B cell (primary cell): ENCODE measurements at regions of chr18 and their contacts with region 1.

Region 1: GRCh38 chr18:10490401-10491165 is 35.2 kb upstream of the NAPG start:
- DNase-seq: peak; percentile 90
- ATAC-seq: peak; percentile 100
- H3K4me3 ChIP-seq: no peak overlapping the region
- H3K4me3 Mint-ChIP-seq: no peak overlapping the region
- H3K27ac ChIP-seq: peak overlapping the region; percentile 3 to 60
- H3K27ac Mint-ChIP-seq: peak overlapping the region; percentile 88
- H3K4me1 ChIP-seq: peaks cover 23 to 28% of the 10 kb centered on the region in 2 donors
- H3K4me1 Mint-ChIP-seq: peaks cover 32% of the 10 kb centered on the region
- H3K27me3 ChIP-seq: no peaks in the 10 kb centered on the region
- H3K27me3 Mint-ChIP-seq: peaks cover 2% of the 10 kb centered on the region
- CTCF ChIP-seq: peak; percentile 75

Region 2: GRCh38 chr18:9971313-9971920 is 519.2 kb before region 1 on chr18:
- CTCF ChIA-PET with region 1: interaction called, 26 read pairs
- POLR2A ChIA-PET with region 1: no interaction called
- intact Hi-C with region 1: loop called (anchors 1 kb)
- DNase-seq: peak; percentile 84
- ATAC-seq: peak; percentile 81
- H3K4me3 ChIP-seq: no peak overlapping the region
- H3K4me3 Mint-ChIP-seq: no peak overlapping the region
- H3K27ac ChIP-seq: no peak overlapping the region
- H3K27ac Mint-ChIP-seq: no peak overlapping the region
- H3K4me1 ChIP-seq: peaks cover 5 to 17% of the 10 kb centered on the region in 2 donors
- H3K4me1 Mint-ChIP-seq: peaks cover 6% of the 10 kb centered on the region
- H3K27me3 ChIP-seq: peaks cover 0 to 35% (median 19%) of the 10 kb centered on the region in 4 experiments
- H3K27me3 Mint-ChIP-seq: peaks cover 30% of the 10 kb centered on the region
- CTCF ChIP-seq: peak; percentile 89

Region 3: DNA sequence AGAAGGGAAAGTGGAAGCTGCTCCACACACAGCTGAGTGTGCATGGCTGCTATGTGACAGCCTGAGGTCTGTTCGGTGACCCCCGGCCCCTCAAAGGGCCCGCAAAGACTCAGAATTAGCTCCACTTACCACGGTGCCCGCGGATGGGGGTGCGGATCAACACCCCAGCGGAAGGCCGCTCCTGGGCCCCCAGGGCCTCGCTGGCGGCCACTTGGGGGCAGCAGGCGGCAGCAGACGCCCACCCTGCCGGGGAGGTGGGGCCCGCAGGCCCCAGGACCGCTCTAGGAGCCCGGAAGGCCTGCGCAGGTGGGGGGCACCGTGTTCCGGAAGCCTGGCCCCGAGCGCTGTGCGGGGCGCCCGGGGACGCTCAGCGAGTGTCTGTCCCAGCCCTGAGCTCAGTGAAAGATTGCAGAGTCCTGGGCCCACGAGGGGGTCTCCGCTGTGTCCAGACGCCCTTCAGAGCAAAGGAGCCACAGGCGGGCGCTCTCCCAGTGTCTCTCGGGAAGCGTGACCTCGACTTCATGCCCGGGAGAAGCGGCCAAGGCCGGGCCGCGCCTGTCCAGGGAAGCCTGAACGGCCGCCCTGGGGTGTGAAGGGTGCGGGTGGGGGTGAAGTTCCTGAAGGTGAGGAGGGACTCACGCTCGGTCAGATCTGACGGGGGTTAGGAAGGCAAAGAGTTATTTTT is 458.1 kb before region 1 on chr18:
- CTCF ChIA-PET with region 1: interaction called, 25 read pairs
- POLR2A ChIA-PET with region 1: no interaction called
- intact Hi-C with region 1: no loop called
- DNase-seq: peak; percentile 72
- ATAC-seq: peak; percentile 91
- H3K4me3 ChIP-seq: peak overlapping the region; percentile 26 to 71 (median 65)
- H3K4me3 Mint-ChIP-seq: peak overlapping the region; percentile 76
- H3K27ac ChIP-seq: peak overlapping the region; percentile 59 to 80
- H3K27ac Mint-ChIP-seq: peak overlapping the region; percentile 62
- H3K4me1 ChIP-seq: peaks cover 11 to 15% of the 10 kb centered on the region in 2 donors
- H3K4me1 Mint-ChIP-seq: peaks cover 13% of the 10 kb centered on the region
- H3K27me3 ChIP-seq: no peaks in the 10 kb centered on the region
- H3K27me3 Mint-ChIP-seq: peaks cover 3% of the 10 kb centered on the region
- CTCF ChIP-seq: peak; percentile 28

Region 4: GRCh38 chr18:10289951-10290637 is 200.5 kb before region 1 on chr18:
- CTCF ChIA-PET with region 1: no interaction called
- POLR2A ChIA-PET with region 1: interaction called, 3 read pairs
- intact Hi-C with region 1: loop called (anchors 10 kb)
- DNase-seq: no peak
- ATAC-seq: no peak
- H3K4me3 ChIP-seq: no peak overlapping the region
- H3K4me3 Mint-ChIP-seq: no peak overlapping the region
- H3K27ac ChIP-seq: no peak overlapping the region
- H3K27ac Mint-ChIP-seq: no peak overlapping the region
- H3K4me1 ChIP-seq: peaks cover 32% of the 10 kb centered on the region in 2 donors
- H3K4me1 Mint-ChIP-seq: peaks cover 38% of the 10 kb centered on the region
- H3K27me3 ChIP-seq: no peaks in the 10 kb centered on the region
- H3K27me3 Mint-ChIP-seq: no peaks in the 10 kb centered on the region
- CTCF ChIP-seq: no peak

Region 5: GRCh38 chr18:10318412-10318970 is 172.1 kb before region 1 on chr18:
- CTCF ChIA-PET with region 1: no interaction called
- POLR2A ChIA-PET with region 1: no interaction called
- intact Hi-C with region 1: loop called (anchors 5 kb)
- DNase-seq: no peak
- ATAC-seq: no peak
- H3K4me3 ChIP-seq: no peak overlapping the region
- H3K4me3 Mint-ChIP-seq: no peak overlapping the region
- H3K27ac ChIP-seq: no peak overlapping the region
- H3K27ac Mint-ChIP-seq: no peak overlapping the region
- H3K4me1 ChIP-seq: peaks cover 27 to 28% of the 10 kb centered on the region in 2 donors
- H3K4me1 Mint-ChIP-seq: peaks cover 50% of the 10 kb centered on the region
- H3K27me3 ChIP-seq: no peaks in the 10 kb centered on the region
- H3K27me3 Mint-ChIP-seq: no peaks in the 10 kb centered on the region
- CTCF ChIP-seq: no peak

Region 6: DNA sequence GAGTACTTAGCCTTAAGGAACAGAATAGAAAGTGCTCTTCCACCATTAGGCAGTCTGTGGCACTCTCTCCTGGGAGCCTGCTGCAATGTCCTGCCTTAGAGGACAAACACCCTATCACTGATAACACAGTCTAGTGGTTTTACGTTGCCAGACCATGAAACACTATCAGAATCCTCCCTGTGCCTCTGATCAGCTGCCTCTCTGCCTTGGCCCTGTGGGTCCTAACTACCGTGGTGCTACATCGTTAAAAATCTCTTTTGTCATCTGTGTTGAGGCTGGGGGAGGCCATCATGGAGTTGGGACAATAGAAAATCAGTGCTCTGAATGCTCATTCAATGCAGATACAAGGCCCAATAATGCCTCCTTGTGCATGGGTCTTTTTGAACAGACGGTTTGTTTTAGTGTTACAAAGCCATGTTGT is 48.0 kb before region 1 on chr18:
- CTCF ChIA-PET with region 1: no interaction called
- POLR2A ChIA-PET with region 1: no interaction called
- intact Hi-C with region 1: no loop called
- DNase-seq: no peak
- ATAC-seq: no peak
- H3K4me3 ChIP-seq: no peak overlapping the region
- H3K4me3 Mint-ChIP-seq: no peak overlapping the region
- H3K27ac ChIP-seq: no peak overlapping the region
- H3K27ac Mint-ChIP-seq: no peak overlapping the region
- H3K4me1 ChIP-seq: no peaks in the 10 kb centered on the region
- H3K4me1 Mint-ChIP-seq: peaks cover 2% of the 10 kb centered on the region
- H3K27me3 ChIP-seq: no peaks in the 10 kb centered on the region
- H3K27me3 Mint-ChIP-seq: peaks cover 7% of the 10 kb centered on the region
- CTCF ChIP-seq: no peak

Region 7: GRCh38 chr18:10519999-10520935 is 29.7 kb after region 1 on chr18:
- CTCF ChIA-PET with region 1: interaction called, 57 read pairs
- POLR2A ChIA-PET with region 1: no interaction called
- intact Hi-C with region 1: loop called (anchors 1 kb)
- DNase-seq: peak; percentile 84
- ATAC-seq: peak; percentile 92
- H3K4me3 ChIP-seq: no peak overlapping the region
- H3K4me3 Mint-ChIP-seq: peak overlapping the region; percentile 29
- H3K27ac ChIP-seq: no peak overlapping the region
- H3K27ac Mint-ChIP-seq: no peak overlapping the region
- H3K4me1 ChIP-seq: peaks cover 9 to 10% of the 10 kb centered on the region in 2 donors
- H3K4me1 Mint-ChIP-seq: peaks cover 10% of the 10 kb centered on the region
- H3K27me3 ChIP-seq: peaks cover 0 to 3% (median 1%) of the 10 kb centered on the region in 4 experiments
- H3K27me3 Mint-ChIP-seq: peaks cover 16% of the 10 kb centered on the region
- CTCF ChIP-seq: peak; percentile 82

Region 8: GRCh38 chr18:10525371-10526210 is 35.0 kb after region 1 on chr18 and contains the start of gene NAPG:
- CTCF ChIA-PET with region 1: interaction called, 13 read pairs
- POLR2A ChIA-PET with region 1: no interaction called
- intact Hi-C with region 1: loop called (anchors 1 kb)
- DNase-seq: peak; percentile 96
- ATAC-seq: peak; percentile 90
- H3K4me3 ChIP-seq: peak within 1 kb of the TSS; percentile 79 to 94 (median 88)
- H3K4me3 Mint-ChIP-seq: peak within 1 kb of the TSS; percentile 99
- H3K27ac ChIP-seq: peak within 1 kb of the TSS; percentile 77 to 80
- H3K27ac Mint-ChIP-seq: peak within 1 kb of the TSS; percentile 96
- H3K4me1 ChIP-seq: peaks cover 20 to 39% of the 10 kb centered on the region in 2 donors
- H3K4me1 Mint-ChIP-seq: peaks cover 51% of the 10 kb centered on the region
- H3K27me3 ChIP-seq: no peaks in the 10 kb centered on the region
- H3K27me3 Mint-ChIP-seq: no peaks in the 10 kb centered on the region
- CTCF ChIP-seq: no peak
- total RNA-seq, gene NAPG: 31.8 and 38.7 TPM in 2 replicates